Caco-2 (cell line): ENCODE measurements at regions of chr16 and their contacts with region 1.

Region 1: GRCh38 chr16:1054660-1055556 is 17.6 kb upstream of the SSTR5 start:
- DNase-seq: peak; percentile 53 to 71
- H3K4me3 ChIP-seq: no peak overlapping the region
- H3K4me3 Mint-ChIP-seq: no peak overlapping the region
- H3K27ac Mint-ChIP-seq: no peak overlapping the region
- H3K4me1 ChIP-seq: no peaks in the 10 kb centered on the region
- H3K4me1 Mint-ChIP-seq: no peaks in the 10 kb centered on the region
- H3K27me3 ChIP-seq: no peaks in the 10 kb centered on the region
- H3K27me3 Mint-ChIP-seq: no peaks in the 10 kb centered on the region
- CTCF ChIP-seq: peak; percentile 79 to 86

Region 2: GRCh38 chr16:813204-813915 is 241.5 kb before region 1 on chr16:
- CTCF ChIA-PET with region 1: interaction called, 4 read pairs
- POLR2A ChIA-PET with region 1: no interaction called
- intact Hi-C with region 1: loop called (anchors 1 kb)
- DNase-seq: peak; percentile 59 to 74
- H3K4me3 ChIP-seq: peak overlapping the region; percentile 25
- H3K4me3 Mint-ChIP-seq: peak overlapping the region; percentile 58
- H3K27ac Mint-ChIP-seq: no peak overlapping the region
- H3K4me1 ChIP-seq: peaks cover 14% of the 10 kb centered on the region
- H3K4me1 Mint-ChIP-seq: no peaks in the 10 kb centered on the region
- H3K27me3 ChIP-seq: no peaks in the 10 kb centered on the region
- H3K27me3 Mint-ChIP-seq: no peaks in the 10 kb centered on the region
- CTCF ChIP-seq: peak; percentile 62 to 72

Region 3: GRCh38 chr16:1026057-1026783 is 28.7 kb before region 1 on chr16:
- CTCF ChIA-PET with region 1: no interaction called
- POLR2A ChIA-PET with region 1: no interaction called
- intact Hi-C with region 1: no loop called
- DNase-seq: no peak
- H3K4me3 ChIP-seq: no peak overlapping the region
- H3K4me3 Mint-ChIP-seq: no peak overlapping the region
- H3K27ac Mint-ChIP-seq: no peak overlapping the region
- H3K4me1 ChIP-seq: no peaks in the 10 kb centered on the region
- H3K4me1 Mint-ChIP-seq: no peaks in the 10 kb centered on the region
- H3K27me3 ChIP-seq: no peaks in the 10 kb centered on the region
- H3K27me3 Mint-ChIP-seq: peaks cover 7% of the 10 kb centered on the region
- CTCF ChIP-seq: no peak

Region 4: DNA sequence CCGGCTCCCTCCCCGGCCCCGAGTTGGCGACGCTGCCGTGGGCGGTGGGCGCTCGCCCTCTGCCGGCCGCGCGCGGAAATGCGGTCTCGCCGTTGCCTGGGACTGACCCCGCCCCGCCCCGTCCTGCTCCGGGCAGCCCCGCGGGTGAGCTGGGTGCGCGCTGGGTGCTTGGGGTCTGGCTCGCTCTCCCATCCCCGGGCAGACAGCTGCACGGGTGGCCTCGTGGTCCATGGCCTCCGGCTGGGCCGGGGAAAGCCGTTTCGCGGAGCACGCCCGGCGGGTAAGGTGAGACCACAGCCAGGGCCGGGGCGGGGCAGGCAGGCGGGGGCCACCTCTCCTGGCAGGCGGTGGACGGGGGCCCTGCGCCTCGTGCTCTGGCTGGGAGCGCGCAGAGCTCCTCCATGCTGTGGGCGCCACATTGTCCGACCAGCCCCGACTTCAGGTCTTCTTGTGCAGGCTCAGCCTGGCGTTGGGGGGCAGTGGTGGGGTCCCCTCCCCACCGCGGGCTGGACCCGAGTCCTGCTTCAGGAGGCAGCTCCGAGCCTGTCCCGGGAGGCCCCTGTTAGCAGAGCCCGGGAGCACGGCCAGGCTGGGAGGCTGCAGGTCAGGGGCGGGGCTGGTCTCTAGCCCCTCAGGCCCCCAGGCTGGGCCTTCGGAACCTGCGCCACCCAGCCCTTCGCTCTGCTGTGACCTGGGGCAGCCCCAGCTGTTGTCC is 48.2 kb after region 1 on chr16:
- CTCF ChIA-PET with region 1: interaction called, 6 read pairs
- POLR2A ChIA-PET with region 1: interaction called, 3 read pairs
- intact Hi-C with region 1: loop called (anchors 1 kb)
- DNase-seq: peak; percentile 53 to 87
- H3K4me3 ChIP-seq: peak overlapping the region; percentile 48
- H3K4me3 Mint-ChIP-seq: no peak overlapping the region
- H3K27ac Mint-ChIP-seq: no peak overlapping the region
- H3K4me1 ChIP-seq: peaks cover 13% of the 10 kb centered on the region
- H3K4me1 Mint-ChIP-seq: no peaks in the 10 kb centered on the region
- H3K27me3 ChIP-seq: no peaks in the 10 kb centered on the region
- H3K27me3 Mint-ChIP-seq: peaks cover 3% of the 10 kb centered on the region
- CTCF ChIP-seq: peak; percentile 58 to 73